Common myeloid progenitor, CD34-positive (primary cell): ENCODE measurements at regions of chr18 and their contacts with region 1.

Region 1: DNA sequence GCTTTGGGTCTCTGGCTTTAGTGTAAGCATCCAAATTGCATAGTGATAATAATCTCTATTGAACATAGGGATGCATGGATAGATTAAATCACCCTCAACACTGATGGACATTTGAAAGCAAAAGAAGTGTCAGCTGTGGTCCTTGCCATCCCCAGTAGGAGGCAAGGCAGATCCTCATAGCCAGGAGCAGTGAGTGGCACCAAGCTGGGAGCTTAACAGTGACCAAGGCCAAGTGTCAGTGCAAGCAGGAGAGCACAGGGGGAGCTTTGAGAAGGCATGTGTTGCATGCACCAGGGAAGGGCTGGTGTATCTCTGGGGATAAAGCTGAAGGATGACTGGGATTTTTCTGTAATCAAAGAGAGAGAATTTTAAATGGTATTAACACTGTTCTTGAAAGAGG is 14.7 kb downstream of the SLC14A1 start:
- DNase-seq: peak in 2 of 3 donors; percentile 38 to 39
- H3K4me3 ChIP-seq: no peak overlapping the region
- H3K27ac ChIP-seq: no peak overlapping the region
- H3K4me1 ChIP-seq: no peaks in the 10 kb centered on the region
- H3K27me3 ChIP-seq: no peaks in the 10 kb centered on the region

Region 2: GRCh38 chr18:45728336-45729010 is 10.2 kb before region 1 on chr18:
- CTCF ChIA-PET with region 1: interaction called, 11 read pairs
- POLR2A ChIA-PET with region 1: no interaction called
- DNase-seq: no peak
- H3K4me3 ChIP-seq: no peak overlapping the region
- H3K27ac ChIP-seq: no peak overlapping the region
- H3K4me1 ChIP-seq: no peaks in the 10 kb centered on the region
- H3K27me3 ChIP-seq: no peaks in the 10 kb centered on the region